PC-9 (cell line): ENCODE measurements at regions of chr1 and their contacts with region 1.

Region 1: DNA sequence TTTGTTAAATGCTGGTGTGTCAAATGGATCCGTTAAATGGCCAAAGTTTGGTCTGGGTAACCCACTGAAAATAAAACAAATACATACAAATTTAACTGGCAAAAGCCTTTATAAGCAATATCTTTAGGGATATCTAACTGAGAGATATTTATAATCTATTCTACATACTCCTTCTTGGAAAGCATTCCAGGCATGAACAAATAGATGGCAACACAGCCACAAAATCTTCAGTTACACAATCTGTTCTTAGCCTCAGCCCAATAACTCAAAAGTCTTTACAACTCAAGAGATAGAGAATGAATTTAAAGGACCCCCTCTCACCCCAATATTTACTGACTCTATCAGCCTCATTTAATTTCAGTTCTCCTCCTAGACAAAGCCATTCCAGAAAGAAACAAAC is 58.7 kb downstream of the NRDC start:
- DNase-seq: no peak
- H3K4me3 ChIP-seq: no peak overlapping the region
- H3K27ac ChIP-seq: no peak overlapping the region
- H3K4me1 ChIP-seq: no peaks in the 10 kb centered on the region
- H3K27me3 ChIP-seq: no peaks in the 10 kb centered on the region
- CTCF ChIP-seq: no peak

Region 2: DNA sequence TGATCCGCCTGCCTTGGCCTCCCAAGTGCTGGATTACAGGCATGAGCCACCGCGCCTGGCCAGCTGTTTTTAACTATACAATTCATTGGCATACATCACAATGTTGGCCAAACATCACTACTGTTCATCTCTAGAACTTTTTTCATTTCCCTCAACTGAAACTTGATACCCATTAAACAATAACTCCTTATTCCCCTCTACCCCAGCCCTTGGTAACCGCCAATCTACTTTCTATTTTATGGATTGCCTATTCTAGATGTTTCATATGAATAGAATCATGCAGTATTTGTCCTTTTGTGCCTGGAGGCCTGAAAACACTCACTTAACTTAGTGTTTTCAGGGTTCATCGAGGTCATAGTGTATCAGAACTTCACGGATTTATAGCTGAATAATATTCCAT is 252.5 kb after region 1 on chr1:
- CTCF ChIA-PET with region 1: interaction called, 4 read pairs
- POLR2A ChIA-PET with region 1: interaction called, 19 read pairs
- intact Hi-C with region 1: no loop called
- DNase-seq: no peak
- H3K4me3 ChIP-seq: no peak overlapping the region
- H3K27ac ChIP-seq: no peak overlapping the region
- H3K4me1 ChIP-seq: no peaks in the 10 kb centered on the region
- H3K27me3 ChIP-seq: no peaks in the 10 kb centered on the region
- CTCF ChIP-seq: no peak